ENCODE measurements at regions of chr17 and their contacts with region 1.

Region 1: GRCh38 chr17:40474419-40475002 is 26.9 kb downstream of the TNS4 start:
- DNase-seq: no peak
- H3K4me3 ChIP-seq: no peak overlapping the region
- H3K27ac ChIP-seq: no peak overlapping the region
- H3K27me3 ChIP-seq: no peaks in the 10 kb centered on the region
- CTCF ChIP-seq: no peak

Region 2: DNA sequence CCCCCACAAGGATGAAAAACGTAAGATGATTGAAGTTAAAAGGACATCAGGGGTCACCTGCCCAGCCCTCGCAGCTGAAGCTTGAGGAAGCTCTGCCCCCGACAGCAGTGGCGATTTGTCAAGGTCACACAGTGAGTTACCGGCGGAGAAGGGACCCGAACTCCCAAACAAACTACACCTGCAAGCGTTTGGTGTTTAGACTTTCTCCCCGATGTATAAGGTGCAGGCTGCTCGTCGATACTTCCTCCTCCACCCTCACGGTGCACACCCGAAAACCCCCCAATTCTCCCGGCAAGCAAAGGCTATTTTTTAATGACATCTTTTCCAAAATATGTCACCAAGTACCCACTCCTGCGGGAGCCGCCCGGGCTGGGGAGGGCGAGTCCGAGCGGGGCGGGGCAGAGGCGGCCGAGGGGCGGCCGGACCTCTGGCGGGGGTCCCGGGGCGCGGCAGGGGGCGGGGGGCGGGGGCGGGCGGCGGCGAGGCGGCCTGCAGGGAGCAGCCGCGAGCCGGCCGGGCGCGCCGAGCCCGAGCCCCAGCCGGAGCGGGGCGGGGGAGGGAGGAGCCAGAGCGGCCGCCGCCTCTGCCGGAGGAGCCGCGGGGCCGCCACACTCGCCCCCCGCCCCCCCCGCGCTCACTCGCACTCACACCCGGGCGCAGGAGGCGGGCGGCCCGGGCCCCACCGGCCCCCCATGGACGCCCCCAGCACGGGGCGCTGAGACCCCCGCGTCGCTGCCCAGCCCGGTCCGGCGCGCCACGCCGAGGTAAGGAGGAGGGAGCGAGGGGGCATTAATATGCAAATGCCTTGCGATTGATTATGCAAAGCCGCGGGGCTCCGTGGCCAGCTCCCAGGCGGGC is 412.0 kb before region 1 on chr17 and contains the start of gene THRA:
- CTCF ChIA-PET with region 1: no interaction called
- POLR2A ChIA-PET with region 1: no interaction called
- DNase-seq: no peak
- H3K4me3 ChIP-seq: peak within 1 kb of the TSS; percentile 90
- H3K27ac ChIP-seq: no peak within 1 kb of the TSS
- H3K27me3 ChIP-seq: peaks cover 3% of the 10 kb centered on the region
- CTCF ChIP-seq: 0 out of 2 replicates have a peak, but pooled peaks have one; percentile 15
- polyA plus RNA-seq, gene THRA: 25.2 and 32.0 TPM in 2 replicates

Region 3: DNA sequence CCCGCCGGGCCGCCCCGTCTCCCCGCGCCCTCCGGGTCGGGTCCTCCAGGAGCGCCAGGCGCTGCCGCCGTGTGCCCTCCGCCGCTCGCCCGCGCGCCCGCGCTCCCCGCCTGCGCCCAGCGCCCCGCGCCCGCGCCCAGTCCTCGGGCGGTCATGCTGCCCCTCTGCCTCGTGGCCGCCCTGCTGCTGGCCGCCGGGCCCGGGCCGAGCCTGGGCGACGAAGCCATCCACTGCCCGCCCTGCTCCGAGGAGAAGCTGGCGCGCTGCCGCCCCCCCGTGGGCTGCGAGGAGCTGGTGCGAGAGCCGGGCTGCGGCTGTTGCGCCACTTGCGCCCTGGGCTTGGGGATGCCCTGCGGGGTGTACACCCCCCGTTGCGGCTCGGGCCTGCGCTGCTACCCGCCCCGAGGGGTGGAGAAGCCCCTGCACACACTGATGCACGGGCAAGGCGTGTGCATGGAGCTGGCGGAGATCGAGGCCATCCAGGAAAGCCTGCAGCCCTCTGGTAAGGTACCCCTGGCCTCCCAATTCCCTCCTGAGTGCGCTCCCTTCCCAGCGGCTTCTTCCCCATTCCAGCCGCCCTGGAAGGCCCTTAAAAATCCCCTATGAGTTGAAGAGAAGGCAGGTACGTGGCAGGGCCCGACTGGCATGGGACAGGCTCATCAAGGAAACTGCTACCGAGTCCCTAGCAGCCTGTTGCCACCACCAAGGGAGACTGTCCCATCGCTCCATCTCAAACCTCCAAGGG is 30.8 kb before region 1 on chr17:
- CTCF ChIA-PET with region 1: interaction called, 13 read pairs
- POLR2A ChIA-PET with region 1: interaction called, 9 read pairs
- DNase-seq: no peak
- H3K4me3 ChIP-seq: peak overlapping the region; percentile 98
- H3K27ac ChIP-seq: peak overlapping the region; percentile 39
- H3K27me3 ChIP-seq: no peaks in the 10 kb centered on the region
- CTCF ChIP-seq: peak; percentile 48

Region 4: GRCh38 chr17:40490289-40490853 is 15.9 kb after region 1 on chr17:
- CTCF ChIA-PET with region 1: interaction called, 33 read pairs
- POLR2A ChIA-PET with region 1: interaction called, 28 read pairs
- DNase-seq: peak; percentile 59
- H3K4me3 ChIP-seq: no peak overlapping the region
- H3K27ac ChIP-seq: peak overlapping the region; percentile 57
- H3K27me3 ChIP-seq: no peaks in the 10 kb centered on the region
- CTCF ChIP-seq: no peak

Region 5: GRCh38 chr17:40518401-40519121 is 44.0 kb after region 1 on chr17:
- CTCF ChIA-PET with region 1: interaction called, 9 read pairs
- POLR2A ChIA-PET with region 1: interaction called, 13 read pairs
- DNase-seq: no peak
- H3K4me3 ChIP-seq: no peak overlapping the region
- H3K27ac ChIP-seq: no peak overlapping the region
- H3K27me3 ChIP-seq: no peaks in the 10 kb centered on the region
- CTCF ChIP-seq: no peak

Region 6: GRCh38 chr17:40551879-40552768 is 77.6 kb after region 1 on chr17:
- CTCF ChIA-PET with region 1: interaction called, 15 read pairs
- POLR2A ChIA-PET with region 1: interaction called, 11 read pairs
- DNase-seq: peak; percentile 95
- H3K4me3 ChIP-seq: peak overlapping the region; percentile 38; the same call in 1 of the 2 replicates
- H3K27ac ChIP-seq: peak overlapping the region; percentile 100
- H3K27me3 ChIP-seq: no peaks in the 10 kb centered on the region
- CTCF ChIP-seq: no peak

Measured in AG04450 (cell line).